ENCODE measurements at regions of chr6 and their contacts with region 1.

Region 1: DNA sequence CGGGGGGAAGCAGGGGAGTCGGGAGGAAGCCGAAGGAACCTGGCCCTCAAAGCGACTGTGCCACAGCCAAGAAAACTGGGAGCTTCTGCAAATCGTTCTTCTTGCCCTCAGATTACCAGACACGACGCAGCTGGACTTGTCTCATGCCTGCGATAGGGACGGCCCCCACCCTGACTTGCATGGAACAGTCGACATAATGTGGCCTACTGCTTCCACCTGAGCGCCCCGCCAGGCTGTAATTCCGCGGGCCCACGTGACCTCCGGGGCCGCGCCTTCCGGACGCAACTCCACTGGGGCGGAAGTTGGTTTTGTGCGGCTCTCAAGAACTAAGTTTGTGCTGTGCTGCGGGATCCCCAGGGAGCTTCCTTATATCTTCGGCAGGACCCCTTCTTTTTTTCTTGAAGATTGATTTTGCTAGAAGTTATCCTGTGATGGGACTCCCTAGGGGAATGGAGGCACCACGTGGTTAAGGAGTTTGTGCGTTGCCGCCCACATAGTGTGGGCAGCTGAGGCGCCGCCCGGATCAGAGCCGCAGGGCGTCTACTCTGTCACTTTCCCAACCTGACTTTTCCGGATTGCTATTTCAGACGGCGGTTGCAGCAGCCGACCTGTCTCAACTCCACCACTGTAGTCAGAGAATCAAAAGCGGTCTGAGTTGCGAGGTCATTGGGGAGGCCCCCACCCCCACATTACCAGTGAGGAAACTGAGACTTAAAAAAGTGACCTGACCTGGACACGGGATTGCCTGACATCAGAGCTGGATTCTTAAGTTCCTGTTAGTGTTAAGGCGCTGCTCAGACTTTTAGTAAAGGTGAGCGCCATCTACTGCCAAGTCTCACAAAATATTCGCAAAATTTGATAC is 540 bp upstream of the CD164 start:
- DNase-seq: peak in 1 of 2 donors; percentile 98
- H3K4me3 ChIP-seq: peak overlapping the region; percentile 87 to 98
- H3K27ac ChIP-seq: peak overlapping the region; percentile 98
- H3K4me1 ChIP-seq: peaks cover 47% of the 10 kb centered on the region
- H3K27me3 ChIP-seq: no peaks in the 10 kb centered on the region
- CTCF ChIP-seq: peak in 2 of 3 experiments; percentile 31 to 45
- POLR2A ChIP-seq: peak in 1 of 2 donors; percentile 6

Region 2: DNA sequence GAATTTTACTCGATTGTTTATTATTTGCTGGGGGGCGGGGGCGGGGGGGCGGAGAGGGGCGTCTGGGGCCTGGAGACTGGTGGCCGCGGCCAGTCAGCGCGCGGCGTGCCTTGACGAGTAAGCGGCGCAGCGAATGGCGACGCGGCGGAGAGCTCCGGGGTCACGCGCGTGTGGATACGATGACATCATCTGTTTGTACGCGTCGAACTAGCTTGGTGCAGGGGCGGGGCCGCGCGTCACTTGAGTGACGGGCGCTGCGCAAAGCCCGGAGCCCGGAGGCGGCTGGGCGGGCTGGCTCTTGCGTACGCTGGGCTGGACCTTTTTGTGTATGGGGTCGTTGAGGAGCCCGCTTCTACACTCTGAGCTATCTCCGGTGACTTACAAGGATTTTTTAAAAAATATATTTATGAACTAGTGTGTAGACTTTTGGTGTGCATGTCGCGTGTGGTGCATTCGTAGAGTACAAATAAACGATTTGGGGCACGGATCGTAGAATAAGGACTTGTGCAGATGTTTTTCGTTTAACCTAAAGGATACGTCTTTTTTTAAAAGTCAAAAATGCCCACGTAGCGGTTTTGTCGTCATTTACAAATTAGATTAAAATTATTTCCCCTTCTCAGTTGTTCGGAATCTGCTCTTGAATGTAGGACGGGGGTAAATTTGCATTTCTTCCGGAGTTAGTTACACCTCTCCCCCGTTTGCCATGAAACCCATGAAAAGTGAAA is 824.3 kb before region 1 on chr6:
- intact Hi-C with region 1: loop called (anchors 10 kb)
- DNase-seq: peak in 1 of 2 donors; percentile 99
- H3K4me3 ChIP-seq: peak overlapping the region; percentile 77 to 94
- H3K27ac ChIP-seq: peak overlapping the region; percentile 99
- H3K4me1 ChIP-seq: peaks cover 35% of the 10 kb centered on the region
- H3K27me3 ChIP-seq: no peaks in the 10 kb centered on the region
- CTCF ChIP-seq: peak in 1 of 3 experiments; percentile 37
- POLR2A ChIP-seq: peak in 1 of 2 donors; percentile 84

Region 3: DNA sequence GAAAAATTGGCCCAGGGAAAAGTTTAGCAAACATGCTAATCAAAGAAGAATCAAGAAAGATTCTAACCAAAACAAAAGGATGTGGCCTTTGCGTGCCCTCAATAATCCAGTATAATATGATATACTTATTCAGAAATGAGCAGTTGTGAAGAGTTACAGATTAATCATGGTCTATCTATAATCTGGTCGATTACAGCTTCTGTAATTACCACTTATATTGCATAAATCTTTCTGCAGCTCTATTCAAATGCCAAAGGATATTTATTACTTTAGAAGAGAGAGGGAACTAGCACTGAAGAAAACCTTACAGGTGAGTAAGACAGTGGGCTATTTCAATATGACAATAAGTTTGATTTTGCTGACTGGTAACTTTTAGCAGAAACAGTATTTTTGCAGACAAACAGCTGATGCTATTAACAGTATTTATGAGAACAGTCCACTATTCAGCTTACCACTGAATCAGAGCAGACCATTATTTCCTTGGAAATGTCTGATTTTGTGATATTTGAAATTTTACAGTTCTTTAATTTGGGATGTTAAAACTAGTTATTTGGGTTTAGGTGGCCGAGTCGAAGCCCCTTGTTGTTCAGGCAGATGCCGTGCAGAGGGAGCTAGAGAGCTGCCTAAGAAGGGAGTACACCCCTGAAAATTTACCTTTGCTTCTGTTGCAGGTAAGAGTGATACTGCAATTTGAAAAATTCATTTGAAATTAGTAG is 195.2 kb before region 1 on chr6:
- intact Hi-C with region 1: loop called (anchors 1 kb)
- DNase-seq: no peak
- H3K4me3 ChIP-seq: no peak overlapping the region
- H3K27ac ChIP-seq: no peak overlapping the region
- H3K4me1 ChIP-seq: no peaks in the 10 kb centered on the region
- H3K27me3 ChIP-seq: no peaks in the 10 kb centered on the region
- CTCF ChIP-seq: peak; percentile 56 to 77 (median 60)
- POLR2A ChIP-seq: no peak

Region 4: DNA sequence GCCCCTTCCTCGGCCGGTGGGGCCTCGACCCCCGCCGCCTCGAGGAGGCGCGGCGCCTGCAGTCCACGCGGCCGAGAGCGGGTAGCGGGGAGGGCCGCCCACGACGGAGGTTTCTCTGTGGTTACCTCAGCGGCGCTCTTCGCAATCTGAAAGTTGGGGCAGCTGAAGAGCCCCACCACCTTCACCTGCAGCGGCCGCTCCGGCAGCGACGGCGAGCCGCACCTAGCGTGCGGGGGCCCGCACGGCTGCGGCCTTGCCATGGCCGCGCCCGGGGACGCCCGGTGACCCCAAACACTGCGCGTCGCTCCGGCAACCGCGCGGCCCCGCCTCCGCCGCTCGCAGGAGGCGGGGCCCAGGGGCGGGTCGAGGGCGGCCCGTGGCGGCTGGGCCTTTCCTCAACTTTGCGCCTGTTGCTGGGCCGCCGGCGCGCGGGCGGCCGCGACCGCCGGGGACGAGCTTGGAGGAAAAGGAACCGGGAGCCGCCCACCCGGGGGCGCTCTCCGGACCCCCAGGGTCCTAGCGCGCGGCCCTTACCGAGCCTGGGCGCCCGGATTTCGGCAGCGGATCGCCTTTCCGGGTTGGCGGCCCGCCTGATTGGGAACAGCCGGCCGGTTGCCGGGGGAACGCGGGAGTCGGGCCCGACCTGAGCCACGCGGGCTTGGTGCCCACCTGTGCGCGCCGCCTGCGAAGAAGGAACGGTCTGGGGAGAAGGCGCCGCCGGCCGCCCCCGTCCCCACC is 57.7 kb after region 1 on chr6 and contains the starts of genes PPIL6 and SMPD2:
- intact Hi-C with region 1: loop called (anchors 5 kb)
- DNase-seq: peak in 1 of 2 donors; percentile 88
- H3K4me3 ChIP-seq: peak within 1 kb of the TSS; percentile 76 to 81
- H3K27ac ChIP-seq: peak within 1 kb of the TSS; percentile 87
- H3K4me1 ChIP-seq: peaks cover 35% of the 10 kb centered on the region
- H3K27me3 ChIP-seq: no peaks in the 10 kb centered on the region
- CTCF ChIP-seq: no peak
- POLR2A ChIP-seq: no peak
- total RNA-seq, gene PPIL6: 3.9 TPM
- total RNA-seq, gene SMPD2: 21.4 TPM

Region 5: GRCh38 chr6:109482905-109483735 is 100.3 kb after region 1 on chr6 and contains the start of gene ZBTB24:
- intact Hi-C with region 1: loop called (anchors 2 kb)
- DNase-seq: peak; percentile 92 to 95
- H3K4me3 ChIP-seq: peak within 1 kb of the TSS; percentile 85 to 95
- H3K27ac ChIP-seq: peak within 1 kb of the TSS; percentile 81
- H3K4me1 ChIP-seq: peaks cover 42% of the 10 kb centered on the region
- H3K27me3 ChIP-seq: no peaks in the 10 kb centered on the region
- CTCF ChIP-seq: no peak
- POLR2A ChIP-seq: peak in 1 of 2 donors; percentile 65
- total RNA-seq, gene ZBTB24: 6.6 TPM

Measured in vagina (tissue), 2 donors.